Activated T-helper 2 cell treated with anti-CD3 and anti-CD28 coated beads, Interferon-gamma antibody, Interleukin-2, Interleukin-4, amounts not matched to agents 10 μg/mL and 5 μg/mL and 100 μg/mL, durations not matched to agents 14 hours and 24 hours and 36 hours (primary cell): ENCODE measurements at regions of chr6 and their contacts with region 1.

Region 1: GRCh38 chr6:42569102-42570028 is 5.5 kb downstream of the UBR2 start:
- DNase-seq: no peak
- H3K4me3 Mint-ChIP-seq: peak overlapping the region; percentile 39
- H3K27ac Mint-ChIP-seq: peak overlapping the region; percentile 75
- H3K4me1 Mint-ChIP-seq: peaks cover 49% of the 10 kb centered on the region
- H3K27me3 Mint-ChIP-seq: no peaks in the 10 kb centered on the region

Region 2: DNA sequence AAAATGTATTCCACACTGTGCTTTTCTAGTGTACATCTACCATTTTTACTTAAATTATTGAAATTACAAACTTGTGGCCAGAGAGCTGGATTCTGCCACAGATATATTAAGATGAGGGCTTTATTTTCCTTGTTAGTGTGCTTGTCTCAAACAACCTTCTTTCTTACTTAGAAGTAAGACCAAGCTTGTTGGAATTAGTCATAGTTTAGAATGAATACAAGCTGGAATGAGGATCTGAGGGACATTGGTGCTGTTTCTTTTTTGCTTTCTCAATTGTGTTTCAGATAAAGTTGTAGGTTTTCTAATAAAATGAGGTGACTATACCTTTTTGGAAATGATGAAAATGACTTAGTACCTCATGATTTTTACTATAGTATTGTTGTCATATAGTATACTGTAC is 34.8 kb after region 1 on chr6:
- intact Hi-C with region 1: no loop called
- DNase-seq: no peak
- H3K4me3 Mint-ChIP-seq: no peak overlapping the region
- H3K27ac Mint-ChIP-seq: no peak overlapping the region
- H3K4me1 Mint-ChIP-seq: peaks cover 10% of the 10 kb centered on the region
- H3K27me3 Mint-ChIP-seq: no peaks in the 10 kb centered on the region

Region 3: DNA sequence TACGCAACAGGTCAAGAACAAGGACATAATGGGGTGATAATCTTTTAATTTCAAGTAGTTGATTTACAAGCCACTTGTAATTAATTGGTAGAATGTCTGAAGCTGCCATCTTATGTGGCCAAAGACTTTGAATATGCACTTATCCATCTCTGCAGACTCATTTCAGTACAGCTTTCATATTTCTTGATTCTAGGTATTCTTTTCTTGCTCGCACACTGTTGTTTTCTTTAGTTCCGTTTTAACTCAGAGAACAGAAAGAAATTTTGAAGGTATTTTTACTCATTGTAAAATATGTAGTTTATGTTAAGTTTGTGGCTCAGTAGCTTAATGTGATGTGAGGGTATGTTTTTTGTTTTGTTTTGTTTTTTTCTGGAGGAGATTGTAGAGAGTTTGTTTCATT is 68.3 kb after region 1 on chr6:
- intact Hi-C with region 1: loop called (anchors 5 kb)
- DNase-seq: no peak
- H3K4me3 Mint-ChIP-seq: peak overlapping the region; percentile 3
- H3K27ac Mint-ChIP-seq: peak overlapping the region; percentile 63
- H3K4me1 Mint-ChIP-seq: peaks cover 22% of the 10 kb centered on the region
- H3K27me3 Mint-ChIP-seq: no peaks in the 10 kb centered on the region

Region 4: GRCh38 chr6:42777126-42777822 is 207.9 kb after region 1 on chr6:
- intact Hi-C with region 1: loop called (anchors 5 kb)
- DNase-seq: no peak
- H3K4me3 Mint-ChIP-seq: no peak overlapping the region
- H3K27ac Mint-ChIP-seq: peak overlapping the region; percentile 13
- H3K4me1 Mint-ChIP-seq: peaks cover 54% of the 10 kb centered on the region
- H3K27me3 Mint-ChIP-seq: no peaks in the 10 kb centered on the region

Region 5: GRCh38 chr6:42960243-42961019 is 391.1 kb after region 1 on chr6 and contains the start of gene GNMT:
- intact Hi-C with region 1: no loop called
- DNase-seq: no peak
- H3K4me3 Mint-ChIP-seq: peak within 1 kb of the TSS; percentile 26
- H3K27ac Mint-ChIP-seq: no peak within 1 kb of the TSS
- H3K4me1 Mint-ChIP-seq: peaks cover 10% of the 10 kb centered on the region
- H3K27me3 Mint-ChIP-seq: peaks cover 9% of the 10 kb centered on the region
- total RNA-seq, gene GNMT: 0.62 and 0.69 TPM in 2 replicates

Region 6: DNA sequence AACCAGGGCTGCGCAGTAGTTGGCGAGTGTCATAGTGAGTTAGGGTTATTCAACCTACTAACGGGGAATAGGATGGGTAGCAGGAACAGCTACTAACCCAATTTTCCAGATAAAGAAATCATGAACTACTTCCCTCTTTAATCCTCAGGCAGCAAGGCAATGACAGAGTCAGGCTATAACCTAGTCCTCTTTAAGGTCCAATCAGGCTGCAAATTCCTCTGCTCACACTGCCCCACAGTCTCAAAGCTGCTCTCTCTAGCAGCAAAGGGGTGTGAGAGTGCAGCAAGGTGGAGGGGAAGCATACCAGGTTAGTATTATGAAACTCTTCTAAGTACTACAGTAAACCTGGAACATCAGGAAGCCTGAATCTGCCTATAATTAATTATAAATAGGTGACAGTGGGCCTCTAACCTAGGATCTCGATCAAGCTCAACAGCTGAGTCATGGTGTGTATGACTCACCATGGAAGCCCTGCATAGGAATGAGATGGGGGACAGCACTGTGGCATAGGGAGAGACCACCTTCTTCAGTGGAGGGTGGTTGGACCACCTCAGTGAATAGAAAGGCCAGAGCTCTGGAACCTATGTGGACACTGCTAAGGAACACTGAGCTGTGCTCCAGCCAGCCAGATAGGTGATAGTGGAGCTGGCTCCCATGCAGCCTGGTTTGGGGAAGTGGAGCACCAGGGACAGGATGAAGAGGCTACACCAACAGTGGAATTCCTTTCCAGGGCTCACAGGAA is 401.7 kb after region 1 on chr6:
- intact Hi-C with region 1: no loop called
- DNase-seq: no peak
- H3K4me3 Mint-ChIP-seq: no peak overlapping the region
- H3K27ac Mint-ChIP-seq: peak overlapping the region; percentile 12
- H3K4me1 Mint-ChIP-seq: peaks cover 10% of the 10 kb centered on the region
- H3K27me3 Mint-ChIP-seq: no peaks in the 10 kb centered on the region